Psoas muscle (tissue), 8 donors: ENCODE measurements at regions of chr16 and their contacts with region 1.

Region 1: DNA sequence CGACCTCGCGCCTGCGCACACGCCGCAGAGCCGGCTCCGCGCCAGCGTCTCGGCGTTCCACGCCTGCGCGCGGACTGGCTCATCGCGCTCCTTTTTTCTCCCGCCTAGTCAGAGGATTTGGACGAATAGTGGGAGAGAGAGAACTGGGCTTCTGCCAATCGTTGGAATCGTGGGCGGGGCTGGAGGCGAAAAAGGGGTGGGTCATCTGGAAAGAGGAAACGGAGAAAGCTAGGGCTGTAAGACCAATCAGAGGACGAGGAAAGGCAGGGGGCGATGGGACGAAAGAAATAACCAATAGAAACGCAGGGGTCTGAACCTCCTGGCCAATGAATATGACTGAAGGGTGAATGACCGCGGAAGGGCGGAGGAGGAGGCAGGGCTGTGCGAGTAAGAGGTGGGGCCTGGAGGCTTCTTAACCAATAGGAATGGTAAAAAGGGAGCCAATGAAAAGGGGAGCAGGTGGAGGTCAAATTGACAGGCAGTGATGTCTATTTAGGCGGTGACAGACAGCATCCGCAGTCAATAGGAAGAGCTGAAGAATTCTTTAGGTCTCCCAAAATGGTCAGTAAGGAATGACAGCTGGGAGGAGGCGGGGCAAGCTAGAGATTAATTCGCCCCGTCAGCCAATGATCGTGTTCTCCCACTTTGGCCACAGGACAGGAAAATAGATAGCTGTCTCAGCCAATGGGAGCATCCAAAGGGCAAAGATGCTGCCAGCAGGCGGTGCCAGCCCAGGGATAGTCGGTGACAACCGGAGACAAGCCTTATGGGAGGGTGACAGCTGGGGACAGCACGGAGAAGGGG is at the start of gene TBC1D10B:
- DNase-seq: peak; percentile 96 to 98
- ATAC-seq: peak; percentile 76 to 87 (median 80)
- H3K4me3 ChIP-seq: peak within 1 kb of the TSS; percentile 93
- H3K27ac ChIP-seq: peak within 1 kb of the TSS; percentile 97
- H3K4me1 ChIP-seq: peaks cover 53% of the 10 kb centered on the region
- H3K27me3 ChIP-seq: no peaks in the 10 kb centered on the region
- CTCF ChIP-seq: peak; percentile 16
- total RNA-seq, gene TBC1D10B: 30.1 to 50.0 (median 34.1) TPM

Region 2: GRCh38 chr16:30356401-30357369 is 14.0 kb before region 1 on chr16:
- intact Hi-C with region 1: loop called in 1 of 2 experiments (anchors 1 kb)
- DNase-seq: peak in 1 of 2 donors; percentile 51
- ATAC-seq: no peak
- H3K4me3 ChIP-seq: peak overlapping the region; percentile 89
- H3K27ac ChIP-seq: peak overlapping the region; percentile 97
- H3K4me1 ChIP-seq: peaks cover 39% of the 10 kb centered on the region
- H3K27me3 ChIP-seq: no peaks in the 10 kb centered on the region
- CTCF ChIP-seq: no peak

Region 3: DNA sequence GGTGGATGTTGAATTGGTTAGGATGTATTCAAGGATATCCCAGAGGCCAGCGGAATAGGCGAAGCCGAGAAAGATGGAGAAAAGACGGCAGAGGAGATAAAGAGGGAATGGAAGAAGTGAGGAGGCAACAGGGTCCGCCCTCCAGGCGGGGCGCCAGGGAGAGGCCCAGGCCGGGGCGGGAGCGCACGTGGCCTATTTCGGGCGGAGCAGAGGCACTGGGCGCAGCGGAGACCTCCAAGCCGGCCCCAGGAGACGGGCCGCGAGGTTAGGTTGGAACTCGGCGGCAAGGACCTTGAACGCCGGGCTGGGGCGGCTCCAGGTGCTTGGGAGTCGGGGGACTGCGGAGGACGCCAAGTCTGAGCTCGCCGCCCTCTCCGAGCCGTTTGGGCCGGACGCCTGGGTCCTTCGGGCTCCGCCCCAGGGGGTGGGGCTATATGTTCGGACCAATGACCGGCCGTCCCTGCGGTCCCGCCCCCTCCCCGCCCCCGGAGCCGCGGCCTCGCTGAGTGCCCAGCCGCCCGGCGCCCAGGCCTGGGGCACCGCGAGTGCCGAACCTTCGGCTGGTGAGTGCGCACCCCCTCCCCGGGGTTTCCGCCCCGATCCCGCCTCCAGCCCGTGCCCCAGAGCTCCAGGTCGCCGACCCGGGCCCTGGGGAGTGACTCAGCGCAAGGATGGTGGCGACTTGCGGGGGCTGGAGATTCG is 36.6 kb after region 1 on chr16 and contains the start of gene ZNF771:
- intact Hi-C with region 1: loop called in 1 of 2 experiments (anchors 5 kb)
- DNase-seq: peak; percentile 96 to 97
- ATAC-seq: peak; percentile 94 to 97 (median 94)
- H3K4me3 ChIP-seq: peak within 1 kb of the TSS; percentile 69
- H3K27ac ChIP-seq: peak within 1 kb of the TSS; percentile 83
- H3K4me1 ChIP-seq: peaks cover 21% of the 10 kb centered on the region
- H3K27me3 ChIP-seq: no peaks in the 10 kb centered on the region
- CTCF ChIP-seq: no peak
- total RNA-seq, gene ZNF771: 4.8 to 14.6 (median 9.1) TPM

Region 4: GRCh38 chr16:30491744-30492308 is 121.2 kb after region 1 on chr16:
- intact Hi-C with region 1: no loop called
- DNase-seq: no peak
- ATAC-seq: peak; percentile 62 to 73 (median 68)
- H3K4me3 ChIP-seq: no peak overlapping the region
- H3K27ac ChIP-seq: no peak overlapping the region
- H3K4me1 ChIP-seq: no peaks in the 10 kb centered on the region
- H3K27me3 ChIP-seq: no peaks in the 10 kb centered on the region
- CTCF ChIP-seq: no peak